AG04449 (cell line): ENCODE measurements at regions of chr14 and their contacts with region 1.

Region 1: DNA sequence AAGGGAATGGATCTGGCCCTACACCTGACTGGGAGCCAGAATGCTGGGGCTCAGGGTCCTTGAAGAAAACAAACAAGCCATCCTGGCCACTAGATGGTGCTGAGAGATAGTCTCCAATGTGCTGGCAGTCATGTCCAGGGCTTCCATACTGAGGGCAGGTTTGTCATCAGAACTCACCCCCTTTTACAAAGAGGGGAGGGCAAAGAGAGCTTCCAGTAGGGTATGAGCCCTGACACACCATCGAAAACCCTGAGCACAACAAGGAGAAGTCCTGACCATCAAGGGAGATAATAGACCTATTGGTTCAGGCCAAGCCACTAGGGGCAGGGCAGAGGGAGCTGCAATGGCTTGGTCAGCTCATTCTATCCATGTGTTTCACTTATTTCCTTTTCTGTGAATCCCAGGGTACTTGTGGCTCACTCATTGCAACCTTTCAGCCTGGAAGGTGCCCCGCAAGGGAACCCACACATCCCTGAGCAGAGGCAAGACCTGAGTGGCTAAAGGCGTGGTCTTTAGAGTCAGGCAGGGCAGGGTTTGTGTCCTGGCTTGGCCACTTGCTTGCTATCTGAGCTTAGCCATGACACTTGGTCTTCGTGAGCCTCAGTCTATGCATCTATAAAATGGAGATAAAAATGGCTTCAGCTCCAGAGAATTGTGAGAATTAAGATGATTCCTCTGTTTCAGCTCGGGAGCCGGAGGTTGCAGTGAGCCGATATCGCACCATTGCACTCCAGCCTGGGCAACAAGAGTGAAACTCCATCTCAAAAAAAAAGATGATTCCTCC is 6.2 kb upstream of the PLEKHH1 start:
- DNase-seq: no peak
- H3K4me3 ChIP-seq: no peak overlapping the region
- CTCF ChIP-seq: peak; percentile 45

Region 2: DNA sequence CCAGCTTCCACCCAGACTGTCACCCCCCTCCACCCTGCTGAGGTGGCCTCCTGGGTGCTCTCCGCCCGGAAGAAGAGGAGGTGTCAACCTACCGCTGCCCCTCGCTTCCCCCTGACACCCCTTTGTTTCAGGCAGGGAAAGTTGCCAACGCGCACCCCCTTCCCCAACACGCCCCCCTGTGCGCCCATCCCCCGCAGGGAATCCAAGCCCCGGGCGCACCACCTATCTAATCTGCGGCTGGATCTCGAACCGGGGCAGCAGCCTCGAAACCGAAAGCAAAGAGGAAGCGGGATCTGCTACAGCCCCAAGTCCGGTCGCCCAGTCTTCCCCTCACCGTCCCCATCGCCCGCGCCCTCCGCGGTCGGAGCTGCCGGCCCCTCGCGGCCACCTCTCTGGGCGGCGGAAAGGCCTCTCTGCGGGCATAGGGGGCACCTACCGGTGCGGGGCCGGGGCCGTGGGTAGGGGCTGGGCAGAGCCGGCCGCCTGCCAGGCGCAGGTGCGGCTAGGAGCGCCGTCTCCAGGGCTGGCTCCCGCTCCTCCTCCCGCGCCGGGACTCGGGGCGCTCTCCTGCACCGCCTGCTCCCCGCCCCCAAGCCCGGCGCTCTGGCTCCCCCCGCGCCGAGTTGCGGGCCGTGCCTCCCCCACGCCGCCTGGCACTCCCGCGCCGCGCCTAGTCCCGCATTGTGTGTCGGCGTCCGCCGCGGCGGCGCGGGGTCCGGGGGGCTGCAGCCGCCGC is 12.1 kb before region 1 on chr14:
- CTCF ChIA-PET with region 1: interaction called, 24 read pairs
- POLR2A ChIA-PET with region 1: no interaction called
- DNase-seq: no peak
- H3K4me3 ChIP-seq: peak overlapping the region; percentile 67
- CTCF ChIP-seq: no peak

Region 3: GRCh38 chr14:67541448-67542387 is 14.8 kb after region 1 on chr14:
- CTCF ChIA-PET with region 1: interaction called, 30 read pairs
- POLR2A ChIA-PET with region 1: no interaction called
- DNase-seq: no peak
- H3K4me3 ChIP-seq: no peak overlapping the region
- CTCF ChIP-seq: no peak

Region 4: GRCh38 chr14:67683842-67684241 is 157.0 kb after region 1 on chr14:
- CTCF ChIA-PET with region 1: no interaction called
- POLR2A ChIA-PET with region 1: no interaction called
- DNase-seq: no peak
- H3K4me3 ChIP-seq: no peak overlapping the region
- CTCF ChIP-seq: no peak

Region 5: GRCh38 chr14:67763158-67763788 is 236.4 kb after region 1 on chr14:
- CTCF ChIA-PET with region 1: no interaction called
- POLR2A ChIA-PET with region 1: no interaction called
- DNase-seq: no peak
- H3K4me3 ChIP-seq: no peak overlapping the region
- CTCF ChIP-seq: no peak